WTC11 (cell line): ENCODE measurements at regions of chr12 and their contacts with region 1.

Region 1: DNA sequence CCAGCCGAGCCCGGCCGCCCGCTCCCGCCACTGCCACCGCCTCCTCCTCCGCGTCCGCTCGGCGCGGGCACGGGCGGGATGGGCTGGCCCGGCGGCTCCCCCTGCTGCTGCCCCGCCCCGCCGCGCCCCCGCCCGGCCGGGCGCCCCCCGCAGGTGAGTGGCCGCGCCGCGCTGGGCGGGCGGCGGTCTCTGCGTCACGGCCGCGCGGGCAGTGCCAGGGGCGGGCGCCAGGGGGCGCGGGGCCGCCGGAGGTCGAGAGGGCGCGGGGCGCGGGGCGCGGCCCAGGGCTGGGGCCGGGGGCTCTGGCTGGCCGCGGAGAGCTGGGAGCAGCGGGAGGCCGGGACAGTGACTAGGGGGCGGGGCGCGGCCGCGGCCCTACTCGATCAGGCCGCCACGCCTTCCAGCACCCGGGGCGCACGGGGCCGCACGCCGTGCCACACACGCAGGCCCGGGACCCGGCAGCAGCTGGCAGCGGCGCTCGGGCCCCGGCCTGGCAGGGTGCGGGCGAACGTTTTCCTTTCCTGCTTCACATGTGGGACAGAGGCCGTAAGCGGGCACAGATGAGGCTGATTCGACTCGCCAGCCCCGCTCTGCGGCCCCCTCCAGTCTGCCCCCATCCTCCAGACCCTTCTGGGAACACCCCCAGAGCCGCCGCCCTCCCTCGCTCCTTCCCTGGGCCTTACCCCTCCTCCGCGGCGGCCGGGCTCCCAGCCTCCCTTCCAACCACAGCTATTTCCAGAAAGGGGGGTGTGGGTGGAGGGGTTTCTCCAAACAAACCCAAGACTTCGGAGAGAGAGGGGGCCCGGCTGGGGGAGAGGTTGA is 2.4 kb upstream of the TNS2 start:
- DNase-seq: peak; percentile 81
- ATAC-seq: peak; percentile 27
- H3K4me3 Mint-ChIP-seq: peak overlapping the region; percentile 62
- H3K27ac Mint-ChIP-seq: no peak overlapping the region
- H3K4me1 Mint-ChIP-seq: peaks cover 80% of the 10 kb centered on the region
- H3K27me3 Mint-ChIP-seq: peaks cover 40% of the 10 kb centered on the region
- CTCF ChIP-seq: peak; percentile 41; the same call in 1 of the 2 replicates

Region 2: GRCh38 chr12:52813885-52814711 is 233.3 kb before region 1 on chr12 and contains the start of gene KRT4:
- CTCF ChIA-PET with region 1: no interaction called
- POLR2A ChIA-PET with region 1: no interaction called
- DNase-seq: no peak
- ATAC-seq: no peak
- H3K4me3 Mint-ChIP-seq: no peak within 1 kb of the TSS
- H3K27ac Mint-ChIP-seq: no peak within 1 kb of the TSS
- H3K4me1 Mint-ChIP-seq: no peaks in the 10 kb centered on the region
- H3K27me3 Mint-ChIP-seq: no peaks in the 10 kb centered on the region
- CTCF ChIP-seq: no peak
- total RNA-seq, gene KRT4: not detected in 3 replicates

Region 3: DNA sequence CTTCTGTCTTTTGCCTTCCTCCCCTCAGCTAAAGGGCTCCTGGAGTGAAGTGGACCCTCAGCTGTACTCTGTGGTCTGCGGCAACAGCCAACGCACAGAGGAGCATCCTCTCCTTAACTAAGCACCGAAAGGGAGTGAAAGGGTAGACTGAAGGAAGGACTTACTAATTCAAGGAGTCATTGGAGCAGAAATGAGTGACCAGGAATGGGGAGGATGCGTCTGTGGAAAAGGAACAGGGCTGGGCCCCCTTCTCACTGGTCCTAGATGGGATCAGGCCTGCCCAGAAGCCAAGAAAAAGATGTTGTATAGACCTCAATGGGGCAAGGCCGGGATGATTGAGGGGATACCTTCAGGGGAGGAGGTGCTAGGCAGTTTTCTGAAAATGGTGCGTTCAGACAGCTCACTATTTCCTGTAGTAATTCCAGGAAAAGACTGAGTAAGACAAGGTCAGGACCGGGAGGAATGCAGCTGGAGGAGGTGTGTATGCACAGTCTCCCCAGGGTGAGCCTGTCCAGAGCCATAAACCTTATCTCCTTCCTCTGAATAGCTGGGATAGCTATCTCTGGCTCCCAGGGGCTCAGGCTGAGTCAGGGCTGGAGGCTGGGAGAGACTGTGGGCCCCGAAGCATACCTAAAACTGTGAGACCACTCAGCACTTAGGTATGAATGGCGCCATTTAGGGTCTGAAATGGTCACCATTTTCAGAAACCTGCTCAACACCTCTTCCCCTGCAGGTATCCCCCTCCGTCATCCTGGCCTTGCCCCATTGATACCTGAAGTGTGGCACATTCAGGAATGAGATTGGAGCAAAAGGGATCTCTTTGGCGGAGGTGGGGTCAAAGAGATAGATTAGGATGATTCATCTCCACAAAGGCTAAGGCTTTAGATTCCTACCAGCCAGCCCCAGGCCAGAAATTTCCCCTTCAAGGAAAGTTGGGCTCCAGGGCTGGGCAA is 122.4 kb before region 1 on chr12:
- CTCF ChIA-PET with region 1: no interaction called
- POLR2A ChIA-PET with region 1: no interaction called
- DNase-seq: no peak
- ATAC-seq: no peak
- H3K4me3 Mint-ChIP-seq: no peak overlapping the region
- H3K27ac Mint-ChIP-seq: no peak overlapping the region; the same call in 1 of the 2 replicates
- H3K4me1 Mint-ChIP-seq: peaks cover 55% of the 10 kb centered on the region
- H3K27me3 Mint-ChIP-seq: no peaks in the 10 kb centered on the region
- CTCF ChIP-seq: no peak

Region 4: DNA sequence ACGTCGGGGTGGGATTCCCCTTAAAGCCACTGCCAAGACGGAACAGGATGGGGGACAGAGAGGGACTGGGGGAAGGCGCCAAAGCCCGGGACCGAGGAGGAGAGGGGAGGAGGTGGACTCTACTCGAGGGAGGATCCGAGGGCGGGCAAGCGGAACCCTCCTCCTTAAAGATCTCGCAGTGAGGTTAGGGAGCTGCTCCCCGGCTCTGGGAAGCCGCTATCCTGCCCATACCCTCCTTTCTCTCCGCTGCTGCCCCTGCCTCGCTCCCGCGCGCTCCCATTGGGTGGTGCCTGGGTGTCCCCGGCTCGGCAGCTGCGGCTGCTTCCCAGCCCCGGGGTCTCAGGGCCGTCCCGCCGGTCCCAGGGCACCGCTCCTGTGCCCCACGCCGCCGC is 82.1 kb before region 1 on chr12:
- CTCF ChIA-PET with region 1: no interaction called
- POLR2A ChIA-PET with region 1: no interaction called
- DNase-seq: peak; percentile 74
- ATAC-seq: peak; percentile 88
- H3K4me3 Mint-ChIP-seq: peak overlapping the region; percentile 65
- H3K27ac Mint-ChIP-seq: no peak overlapping the region
- H3K4me1 Mint-ChIP-seq: peaks cover 14% of the 10 kb centered on the region
- H3K27me3 Mint-ChIP-seq: peaks cover 51% of the 10 kb centered on the region
- CTCF ChIP-seq: no peak

Region 5: DNA sequence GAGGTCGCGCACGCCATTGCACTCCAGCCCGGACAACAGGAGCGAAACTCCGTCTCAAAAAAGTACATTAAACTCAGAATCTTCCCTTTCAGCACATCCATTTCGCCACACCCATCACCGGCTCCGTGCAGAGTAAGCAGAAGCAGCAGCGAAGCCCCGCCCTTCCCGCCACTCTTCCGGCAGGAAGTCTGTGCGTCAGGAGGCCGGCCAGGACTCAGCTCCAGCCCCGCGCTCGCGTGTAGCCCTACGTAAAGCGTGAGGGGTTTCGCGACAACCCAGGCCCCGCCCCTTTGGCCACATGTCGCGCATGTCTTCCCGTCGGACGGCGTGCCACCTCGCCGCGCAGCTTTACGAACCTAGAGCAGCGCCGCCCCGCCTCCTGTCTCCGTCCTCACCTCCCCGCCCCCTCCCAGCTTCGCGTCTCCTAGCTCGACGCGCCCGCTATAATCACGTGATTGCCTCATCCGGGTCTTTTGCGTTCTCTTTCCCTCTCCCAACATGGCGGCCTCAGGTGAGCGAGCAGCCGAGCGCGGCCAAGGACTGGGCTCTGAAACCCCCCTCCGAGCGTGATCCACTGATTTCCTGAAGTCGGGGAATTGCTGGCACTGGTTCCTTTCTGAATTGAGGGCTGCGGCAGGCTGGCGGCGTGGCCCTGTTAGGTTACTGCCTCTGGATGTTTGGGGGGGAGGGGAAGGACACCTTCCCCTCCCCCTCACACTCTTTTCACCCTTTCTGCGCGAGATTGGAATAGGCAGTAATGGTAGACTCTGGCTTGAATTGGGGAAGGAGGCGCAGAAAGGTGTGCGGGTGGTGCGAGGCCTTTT is 41.2 kb before region 1 on chr12 and contains the start of gene EIF4B:
- CTCF ChIA-PET with region 1: interaction called, 16 read pairs
- POLR2A ChIA-PET with region 1: interaction called, 6 read pairs
- DNase-seq: peak; percentile 100
- ATAC-seq: peak; percentile 90
- H3K4me3 Mint-ChIP-seq: peak within 1 kb of the TSS; percentile 99
- H3K27ac Mint-ChIP-seq: peak within 1 kb of the TSS; percentile 100
- H3K4me1 Mint-ChIP-seq: peaks cover 50% of the 10 kb centered on the region
- H3K27me3 Mint-ChIP-seq: no peaks in the 10 kb centered on the region
- CTCF ChIP-seq: no peak
- total RNA-seq, gene EIF4B: 730 to 860 TPM (median 838 TPM) in 3 replicates

Region 6: GRCh38 chr12:53079226-53080117 is 32.0 kb after region 1 on chr12 and contains the start of gene SPRYD3:
- CTCF ChIA-PET with region 1: interaction called, 33 read pairs
- POLR2A ChIA-PET with region 1: interaction called, 6 read pairs
- DNase-seq: peak; percentile 98
- ATAC-seq: peak; percentile 95
- H3K4me3 Mint-ChIP-seq: peak within 1 kb of the TSS; percentile 85
- H3K27ac Mint-ChIP-seq: peak within 1 kb of the TSS; percentile 95
- H3K4me1 Mint-ChIP-seq: peaks cover 13% of the 10 kb centered on the region
- H3K27me3 Mint-ChIP-seq: peaks cover 43% of the 10 kb centered on the region
- CTCF ChIP-seq: no peak
- total RNA-seq, gene SPRYD3: 6.5 to 11.9 TPM (median 6.8 TPM) in 3 replicates